ENCODE measurements at regions of chr14 and their contacts with region 1.

Region 1: DNA sequence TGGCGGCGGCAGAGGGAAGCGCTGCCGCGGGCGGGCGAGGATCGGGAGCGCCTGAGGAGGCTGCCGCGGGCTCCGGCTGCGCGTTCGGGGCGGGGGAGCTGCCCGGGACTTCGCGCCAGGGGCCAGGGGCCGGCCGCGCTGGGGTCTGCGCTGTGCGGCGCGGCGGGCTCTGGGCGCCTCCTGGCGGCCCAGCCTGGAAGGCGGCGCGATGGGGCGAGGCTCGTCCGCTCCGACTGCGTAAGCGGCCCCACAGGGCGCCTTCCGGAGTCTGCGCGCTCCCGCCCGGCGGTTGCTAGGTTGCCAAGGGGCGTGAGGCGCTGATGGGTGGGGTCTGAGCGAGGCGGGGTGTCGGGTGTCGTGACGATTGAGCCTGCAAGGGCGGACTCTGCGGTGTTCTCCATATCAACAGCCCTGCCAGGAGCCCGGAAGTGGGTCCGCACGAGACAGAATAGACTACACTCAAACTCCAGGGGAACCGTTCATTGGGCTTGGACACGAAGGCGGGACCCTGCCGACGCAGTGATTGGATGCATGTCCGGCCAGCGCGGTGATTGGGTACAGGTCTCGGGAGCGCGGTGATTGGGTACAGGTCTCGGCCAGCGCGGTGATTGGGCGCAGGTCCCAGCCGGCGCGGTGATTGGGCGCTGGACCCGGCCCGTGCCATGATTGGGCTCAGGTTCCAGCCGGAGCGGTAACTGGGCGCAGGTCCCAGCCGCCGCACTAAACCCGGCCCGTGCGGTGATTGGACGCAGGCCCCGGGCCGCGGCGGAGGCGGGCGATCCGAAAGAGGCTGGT is at the start of gene TEDC1:
- DNase-seq: peak; percentile 98 to 100 (median 99)
- ATAC-seq: peak; percentile 67
- H3K4me3 ChIP-seq: peak within 1 kb of the TSS; percentile 59 to 84
- H3K4me3 Mint-ChIP-seq: peak within 1 kb of the TSS; percentile 84
- H3K27ac ChIP-seq: peak within 1 kb of the TSS; percentile 95 to 96
- H3K27ac Mint-ChIP-seq: peak within 1 kb of the TSS; percentile 96
- H3K4me1 ChIP-seq: peaks cover 39% of the 10 kb centered on the region
- H3K4me1 Mint-ChIP-seq: peaks cover 27% of the 10 kb centered on the region
- H3K27me3 ChIP-seq: no peaks in the 10 kb centered on the region
- H3K27me3 Mint-ChIP-seq: no peaks in the 10 kb centered on the region
- CTCF ChIP-seq: peak; percentile 84
- total RNA-seq, gene TEDC1: 55.3 to 58.5 TPM

Region 2: DNA sequence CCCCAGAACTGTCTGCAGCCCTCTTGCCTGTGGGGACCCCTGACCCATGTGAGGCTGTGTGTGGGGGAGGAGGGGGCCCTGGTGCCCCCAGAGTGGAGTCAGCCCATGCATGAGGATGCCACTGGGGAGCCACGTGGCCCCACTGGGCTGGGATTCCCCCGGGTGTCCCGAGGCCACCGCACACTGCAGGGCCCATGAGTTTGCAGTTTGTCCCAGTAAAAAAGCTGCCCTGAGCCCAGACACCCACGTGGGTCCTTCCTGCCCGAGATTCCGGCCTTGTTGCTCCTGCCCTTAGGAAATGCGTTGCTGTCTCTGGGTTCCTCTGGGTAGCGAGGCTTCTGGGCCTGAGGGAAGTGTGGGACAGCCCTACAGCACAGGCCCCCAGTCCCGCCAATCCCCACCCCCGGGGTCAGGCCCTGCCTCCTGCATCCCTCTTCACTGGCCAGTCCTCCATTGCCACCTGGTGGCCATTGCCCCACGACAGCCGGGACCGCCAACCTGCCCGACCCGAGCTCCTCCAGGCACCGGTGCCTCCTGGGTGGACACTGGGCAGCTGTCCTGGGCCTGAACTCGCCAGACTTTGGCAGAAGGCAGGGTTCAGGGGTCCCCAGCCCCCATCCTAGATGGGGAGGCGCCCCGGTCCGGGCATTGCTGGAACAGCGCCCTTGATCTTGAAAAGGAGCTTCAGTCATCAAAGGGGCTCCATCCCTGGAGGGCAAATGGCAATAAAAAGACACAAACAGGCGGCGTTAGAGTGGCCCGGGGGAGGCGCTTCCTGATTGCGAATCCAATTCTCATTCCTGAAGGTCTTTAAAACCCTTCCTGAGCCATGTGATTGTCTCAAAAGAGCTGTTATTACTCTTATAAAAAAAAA is 926.8 kb before region 1 on chr14:
- CTCF ChIA-PET with region 1: no interaction called
- POLR2A ChIA-PET with region 1: no interaction called
- intact Hi-C with region 1: no loop called
- DNase-seq: peak; percentile 48 to 82 (median 71)
- ATAC-seq: peak; percentile 71
- H3K4me3 ChIP-seq: no peak overlapping the region
- H3K4me3 Mint-ChIP-seq: no peak overlapping the region
- H3K27ac ChIP-seq: no peak overlapping the region
- H3K27ac Mint-ChIP-seq: no peak overlapping the region
- H3K4me1 ChIP-seq: no peaks in the 10 kb centered on the region
- H3K4me1 Mint-ChIP-seq: no peaks in the 10 kb centered on the region
- H3K27me3 ChIP-seq: peaks cover 0 to 3% of the 10 kb centered on the region in 2 experiments
- H3K27me3 Mint-ChIP-seq: peaks cover 15% of the 10 kb centered on the region
- CTCF ChIP-seq: peak; percentile 72

Region 3: DNA sequence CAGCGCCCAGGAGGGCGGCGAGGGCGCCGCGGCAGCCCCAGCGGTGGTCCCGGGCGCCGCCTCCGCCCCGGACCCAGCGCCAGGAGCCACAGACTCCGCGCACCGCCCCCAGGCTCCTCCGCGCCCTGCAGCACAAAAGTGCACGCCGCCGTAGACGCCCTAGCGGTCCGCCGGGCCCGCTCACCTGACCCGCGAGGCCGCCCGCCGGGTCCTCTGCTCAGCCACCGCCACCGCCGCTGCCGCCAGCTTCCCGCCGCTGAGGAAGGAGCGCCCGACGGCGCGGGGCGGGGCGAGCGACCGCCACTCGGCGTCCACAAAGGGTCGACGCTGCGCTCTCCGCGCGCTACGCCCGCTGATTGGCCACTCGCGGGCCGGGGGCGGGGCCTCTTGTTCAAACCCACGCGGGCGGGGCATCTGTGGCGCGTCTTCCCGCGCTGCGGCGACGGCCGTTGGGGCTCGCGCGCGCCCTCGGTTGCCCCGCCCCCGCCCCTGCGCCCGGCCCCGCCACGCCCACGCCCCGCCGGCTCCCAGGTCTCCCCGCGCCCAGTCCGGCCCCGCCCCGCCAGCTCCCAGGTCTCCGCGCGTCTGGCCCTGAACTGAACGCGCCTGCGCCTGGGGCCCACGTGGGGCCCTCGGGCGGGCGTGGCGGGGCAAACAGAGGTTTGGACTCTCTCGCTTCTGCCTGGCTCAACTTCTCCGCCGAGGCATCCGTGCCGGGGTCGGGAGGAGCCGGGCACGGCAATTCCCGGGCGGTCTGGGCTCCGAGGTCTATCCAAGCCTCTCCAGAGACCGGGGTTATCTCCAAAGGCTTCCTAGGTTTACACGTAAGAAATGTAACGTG is 469.7 kb before region 1 on chr14 and contains the start of gene CDCA4:
- CTCF ChIA-PET with region 1: no interaction called
- POLR2A ChIA-PET with region 1: no interaction called
- intact Hi-C with region 1: loop called in 1 of 2 experiments (anchors 2 kb)
- DNase-seq: peak; percentile 97 to 99 (median 98)
- ATAC-seq: peak; percentile 82
- H3K4me3 ChIP-seq: peak within 1 kb of the TSS; percentile 58 to 87
- H3K4me3 Mint-ChIP-seq: peak within 1 kb of the TSS; percentile 89
- H3K27ac ChIP-seq: peak within 1 kb of the TSS; percentile 78 to 81
- H3K27ac Mint-ChIP-seq: peak within 1 kb of the TSS; percentile 96
- H3K4me1 ChIP-seq: peaks cover 23% of the 10 kb centered on the region
- H3K4me1 Mint-ChIP-seq: peaks cover 53% of the 10 kb centered on the region
- H3K27me3 ChIP-seq: no peaks in the 10 kb centered on the region
- H3K27me3 Mint-ChIP-seq: no peaks in the 10 kb centered on the region
- CTCF ChIP-seq: no peak
- total RNA-seq, gene CDCA4: 20.2 to 22.9 TPM

Region 4: DNA sequence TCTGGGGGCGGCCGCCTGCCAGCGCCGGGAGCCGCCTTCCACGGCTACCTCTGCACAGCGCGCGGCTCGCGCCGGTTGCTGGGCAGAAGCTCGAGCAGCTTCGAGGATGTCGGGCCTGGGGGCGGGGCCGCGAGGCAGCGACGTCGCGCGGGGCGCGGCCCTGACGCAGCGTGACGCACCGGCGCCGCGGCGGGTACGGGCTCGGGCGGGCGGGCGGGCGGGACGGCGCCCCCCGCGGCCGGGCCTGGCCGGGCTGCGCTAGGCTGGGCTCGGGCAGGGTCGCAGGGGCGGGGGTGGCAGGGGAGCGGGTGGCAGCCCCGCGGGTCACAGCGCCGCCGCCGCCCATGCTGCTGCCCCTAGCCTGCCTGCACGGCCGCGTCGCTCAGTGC is 242.4 kb before region 1 on chr14 and contains the start of gene BTBD6:
- CTCF ChIA-PET with region 1: no interaction called
- POLR2A ChIA-PET with region 1: no interaction called
- intact Hi-C with region 1: loop called in 1 of 2 experiments (anchors 10 kb)
- DNase-seq: peak; percentile 80 to 95 (median 88)
- ATAC-seq: peak; percentile 91
- H3K4me3 ChIP-seq: peak within 1 kb of the TSS; percentile 60 to 73
- H3K4me3 Mint-ChIP-seq: peak within 1 kb of the TSS; percentile 78
- H3K27ac ChIP-seq: peak within 1 kb of the TSS; percentile 51 to 73
- H3K27ac Mint-ChIP-seq: peak within 1 kb of the TSS; percentile 75
- H3K4me1 ChIP-seq: peaks cover 21% of the 10 kb centered on the region
- H3K4me1 Mint-ChIP-seq: peaks cover 33% of the 10 kb centered on the region
- H3K27me3 ChIP-seq: no peaks in the 10 kb centered on the region
- H3K27me3 Mint-ChIP-seq: no peaks in the 10 kb centered on the region
- CTCF ChIP-seq: no peak
- total RNA-seq, gene BTBD6: 34.1 to 34.4 TPM

Region 5: GRCh38 chr14:105363847-105364708 is 126.7 kb before region 1 on chr14:
- CTCF ChIA-PET with region 1: interaction called, 105 read pairs
- POLR2A ChIA-PET with region 1: interaction called, 4 read pairs
- intact Hi-C with region 1: no loop called
- DNase-seq: peak; percentile 25 to 77 (median 56)
- ATAC-seq: peak; percentile 88
- H3K4me3 ChIP-seq: no peak overlapping the region
- H3K4me3 Mint-ChIP-seq: peak overlapping the region; percentile 68
- H3K27ac ChIP-seq: no peak overlapping the region
- H3K27ac Mint-ChIP-seq: peak overlapping the region; percentile 58
- H3K4me1 ChIP-seq: peaks cover 13% of the 10 kb centered on the region
- H3K4me1 Mint-ChIP-seq: peaks cover 13% of the 10 kb centered on the region
- H3K27me3 ChIP-seq: no peaks in the 10 kb centered on the region
- H3K27me3 Mint-ChIP-seq: no peaks in the 10 kb centered on the region
- CTCF ChIP-seq: no peak

Region 6: DNA sequence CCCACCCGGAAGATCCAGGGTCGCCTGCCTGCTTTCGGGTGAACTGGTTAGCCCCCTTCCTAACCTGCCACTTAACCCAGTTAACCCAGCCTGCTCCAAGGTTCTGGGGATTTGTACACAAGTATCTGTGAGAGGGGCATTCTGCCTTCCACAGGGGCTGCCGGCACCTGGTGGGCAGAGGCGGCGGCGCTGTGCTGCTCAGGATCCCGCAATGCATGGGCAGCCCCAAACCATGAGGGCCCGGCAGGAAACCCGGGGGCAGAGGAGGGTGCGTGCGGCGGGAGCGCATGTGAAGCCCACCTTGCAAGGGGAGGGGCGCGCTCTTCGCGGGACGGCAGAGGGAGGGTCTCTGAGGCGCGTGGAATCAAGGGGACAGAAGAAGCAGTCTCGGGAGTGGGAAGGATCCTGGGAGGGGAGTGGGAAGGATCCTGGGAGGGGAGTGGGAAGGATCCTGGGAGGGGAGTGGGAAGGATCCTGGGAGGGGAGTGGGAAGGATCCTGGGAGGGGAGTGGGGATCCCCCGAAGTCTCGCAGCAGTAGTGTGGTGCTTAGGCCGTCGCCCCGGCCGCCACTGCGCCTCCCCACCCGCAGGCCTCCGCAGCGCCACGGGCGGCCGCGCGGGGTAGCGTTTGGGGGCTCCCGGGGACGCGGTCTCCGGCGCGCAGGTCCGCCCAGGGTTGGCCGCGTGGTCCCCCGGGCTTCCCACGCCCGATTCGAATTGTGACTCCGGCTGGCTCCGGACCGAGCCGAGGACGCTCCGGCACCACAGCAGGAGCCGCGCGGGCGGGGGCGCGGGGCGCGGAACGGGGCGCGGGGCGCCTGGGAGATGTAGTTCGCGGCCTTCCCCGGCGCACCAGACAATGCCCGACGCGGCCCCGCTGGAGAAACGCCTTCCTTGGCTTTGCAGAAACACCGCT is 76.1 kb before region 1 on chr14:
- CTCF ChIA-PET with region 1: interaction called, 5 read pairs
- POLR2A ChIA-PET with region 1: interaction called, 3 read pairs
- intact Hi-C with region 1: loop called (anchors 1 to 2 kb)
- DNase-seq: peak; percentile 27 to 79 (median 57)
- ATAC-seq: peak; percentile 82
- H3K4me3 ChIP-seq: peak overlapping the region; percentile 24 to 69
- H3K4me3 Mint-ChIP-seq: peak overlapping the region; percentile 80
- H3K27ac ChIP-seq: no peak overlapping the region
- H3K27ac Mint-ChIP-seq: no peak overlapping the region
- H3K4me1 ChIP-seq: peaks cover 26% of the 10 kb centered on the region
- H3K4me1 Mint-ChIP-seq: peaks cover 14% of the 10 kb centered on the region
- H3K27me3 ChIP-seq: peaks cover 4 to 12% of the 10 kb centered on the region in 2 experiments
- H3K27me3 Mint-ChIP-seq: peaks cover 9% of the 10 kb centered on the region
- CTCF ChIP-seq: peak; percentile 92

Region 7: GRCh38 chr14:105473677-105474482 is 16.9 kb before region 1 on chr14:
- CTCF ChIA-PET with region 1: interaction called, 30 read pairs
- POLR2A ChIA-PET with region 1: interaction called, 8 read pairs
- intact Hi-C with region 1: loop called in 1 of 2 experiments (anchors 2 kb)
- DNase-seq: peak in 8 of 9 experiments; percentile 52 to 77 (median 76)
- ATAC-seq: peak; percentile 62
- H3K4me3 ChIP-seq: peak overlapping the region; percentile 41 to 53
- H3K4me3 Mint-ChIP-seq: peak overlapping the region; percentile 70
- H3K27ac ChIP-seq: no peak overlapping the region
- H3K27ac Mint-ChIP-seq: no peak overlapping the region
- H3K4me1 ChIP-seq: peaks cover 43% of the 10 kb centered on the region
- H3K4me1 Mint-ChIP-seq: peaks cover 14% of the 10 kb centered on the region
- H3K27me3 ChIP-seq: peaks cover 0 to 25% of the 10 kb centered on the region in 2 experiments
- H3K27me3 Mint-ChIP-seq: peaks cover 3% of the 10 kb centered on the region
- CTCF ChIP-seq: no peak

Measured in CD8-positive, alpha-beta T cell (primary cell).